Transverse colon (tissue), 4 donors: ENCODE measurements at regions of chr1 and their contacts with region 1.

Region 1: DNA sequence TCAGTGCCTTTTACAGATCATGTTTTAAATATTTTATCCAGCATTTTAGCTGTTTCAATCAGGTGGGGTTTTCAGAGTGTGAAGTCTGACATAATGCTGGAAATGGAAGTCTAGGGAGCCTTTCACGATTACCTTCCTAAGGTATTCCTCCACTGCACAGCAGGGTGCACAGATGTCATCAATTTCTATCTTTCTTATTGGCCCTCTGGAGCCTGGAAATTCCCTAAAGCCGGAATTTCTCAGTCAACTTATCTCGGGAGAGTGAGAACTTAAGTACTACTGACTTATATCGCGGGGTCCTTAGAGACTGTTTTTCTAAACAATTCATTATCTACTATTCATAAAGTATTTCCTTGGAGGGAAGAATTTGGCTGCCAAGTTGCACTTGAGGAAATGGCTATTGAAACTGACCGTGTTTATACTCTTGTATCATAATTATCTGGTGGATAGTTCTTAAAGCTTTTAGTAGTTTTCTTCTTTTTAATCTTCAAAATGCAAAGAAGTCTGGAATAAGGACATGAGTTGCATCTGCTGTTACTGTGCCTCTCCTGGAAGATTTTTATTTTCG is 311.8 kb upstream of the B3GALT2 start:
- DNase-seq: no peak
- H3K4me3 ChIP-seq: no peak overlapping the region
- H3K27ac ChIP-seq: no peak overlapping the region
- H3K4me1 ChIP-seq: peaks cover 0 to 11% (median 3%) of the 10 kb centered on the region in 4 donors
- H3K27me3 ChIP-seq: no peaks in the 10 kb centered on the region
- CTCF ChIP-seq: no peak
- EP300 ChIP-seq: no peak
- POLR2A ChIP-seq: no peak

Region 2: DNA sequence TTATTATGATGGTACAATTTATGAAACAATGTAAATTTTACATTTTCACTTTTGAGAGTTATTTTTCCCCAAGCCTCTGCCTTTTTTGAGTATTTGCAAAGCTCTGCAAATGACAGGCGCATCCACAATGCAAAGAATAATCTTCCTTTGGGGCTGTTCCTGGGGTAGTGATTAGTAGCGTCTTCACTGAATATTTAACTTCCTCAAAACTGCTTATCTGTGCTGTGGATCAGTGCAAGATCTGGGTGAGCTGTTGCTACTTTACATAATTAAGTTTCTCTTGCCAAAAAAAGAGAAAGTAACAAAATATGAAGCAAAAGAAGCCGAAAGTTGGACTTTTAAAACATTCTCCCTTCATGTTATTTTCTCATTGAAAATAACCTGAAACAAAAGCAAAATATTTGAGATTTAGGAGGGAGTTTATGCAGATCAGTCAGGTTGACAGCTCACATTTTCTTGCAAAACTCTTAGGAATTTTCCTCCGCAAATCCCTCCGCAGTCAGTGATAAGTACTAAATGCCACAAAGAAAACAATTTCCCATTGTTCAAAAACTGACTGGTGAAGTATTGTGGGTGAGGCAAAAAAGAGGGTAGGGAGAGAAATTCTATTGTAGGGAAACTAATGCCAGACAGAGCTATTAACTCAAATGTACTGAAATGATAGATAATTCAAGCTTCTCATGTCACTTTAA is 35.4 kb before region 1 on chr1:
- in situ Hi-C with region 1: no loop called
- intact Hi-C with region 1: no loop called
- DNase-seq: no peak
- H3K4me3 ChIP-seq: no peak overlapping the region
- H3K27ac ChIP-seq: peak overlapping the region in 1 of 4 donors; percentile 6
- H3K4me1 ChIP-seq: peaks cover 0 to 9% (median 0%) of the 10 kb centered on the region in 4 donors
- H3K27me3 ChIP-seq: no peaks in the 10 kb centered on the region
- CTCF ChIP-seq: no peak
- EP300 ChIP-seq: no peak
- POLR2A ChIP-seq: no peak

Region 3: GRCh38 chr1:194734970-194735369 is 1236.8 kb after region 1 on chr1:
- in situ Hi-C with region 1: no loop called
- intact Hi-C with region 1: loop called (anchors 5 kb)
- DNase-seq: no peak
- H3K4me3 ChIP-seq: no peak overlapping the region
- H3K27ac ChIP-seq: no peak overlapping the region
- H3K4me1 ChIP-seq: no peaks in the 10 kb centered on the region
- H3K27me3 ChIP-seq: no peaks in the 10 kb centered on the region
- CTCF ChIP-seq: no peak
- EP300 ChIP-seq: no peak
- POLR2A ChIP-seq: no peak